ENCODE measurements at regions of chr2 and their contacts with region 1.

Region 1: GRCh38 chr2:181891966-181892798 is 652 bp downstream of the ITPRID2 start:
- DNase-seq: peak; percentile 78 to 88
- H3K4me3 ChIP-seq: peak overlapping the region; percentile 88
- H3K27ac ChIP-seq: peak overlapping the region; percentile 82
- H3K4me1 ChIP-seq: peaks cover 49% of the 10 kb centered on the region
- H3K27me3 ChIP-seq: no peaks in the 10 kb centered on the region
- CTCF ChIP-seq: peak; percentile 41; the same call in 1 of the 2 replicates

Region 2: DNA sequence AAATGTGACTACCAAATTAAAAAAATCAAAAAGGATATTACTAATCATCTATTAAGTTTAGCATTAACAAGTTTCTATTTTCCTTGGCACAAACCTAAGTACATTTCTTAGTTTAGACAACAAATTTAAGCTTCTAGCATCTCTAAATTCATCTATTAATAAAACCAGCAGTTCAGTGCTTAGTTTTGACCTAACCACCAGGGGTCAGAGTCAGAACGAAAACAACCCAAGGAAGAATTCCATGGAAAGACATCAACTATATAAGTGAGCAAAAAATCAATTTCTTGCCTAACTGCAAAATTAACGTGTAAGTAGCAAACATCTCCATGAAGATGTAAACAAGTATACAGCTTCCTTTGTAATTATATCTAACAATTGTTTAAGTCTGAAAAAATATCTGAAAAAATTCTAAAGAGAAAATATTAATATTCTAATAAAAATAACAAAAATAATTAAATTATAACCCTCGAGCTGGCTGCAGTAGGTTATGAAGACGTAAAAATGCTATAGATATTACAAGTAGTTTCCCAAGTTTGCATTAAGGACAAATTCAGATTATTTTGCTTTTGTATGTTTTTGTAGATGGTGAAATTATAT is 318.9 kb before region 1 on chr2:
- CTCF ChIA-PET with region 1: no interaction called
- POLR2A ChIA-PET with region 1: no interaction called
- intact Hi-C with region 1: loop called (anchors 10 kb)
- DNase-seq: peak; percentile 19 to 49
- H3K4me3 ChIP-seq: no peak overlapping the region
- H3K27ac ChIP-seq: no peak overlapping the region
- H3K4me1 ChIP-seq: no peaks in the 10 kb centered on the region
- H3K27me3 ChIP-seq: no peaks in the 10 kb centered on the region
- CTCF ChIP-seq: peak; percentile 86

Region 3: DNA sequence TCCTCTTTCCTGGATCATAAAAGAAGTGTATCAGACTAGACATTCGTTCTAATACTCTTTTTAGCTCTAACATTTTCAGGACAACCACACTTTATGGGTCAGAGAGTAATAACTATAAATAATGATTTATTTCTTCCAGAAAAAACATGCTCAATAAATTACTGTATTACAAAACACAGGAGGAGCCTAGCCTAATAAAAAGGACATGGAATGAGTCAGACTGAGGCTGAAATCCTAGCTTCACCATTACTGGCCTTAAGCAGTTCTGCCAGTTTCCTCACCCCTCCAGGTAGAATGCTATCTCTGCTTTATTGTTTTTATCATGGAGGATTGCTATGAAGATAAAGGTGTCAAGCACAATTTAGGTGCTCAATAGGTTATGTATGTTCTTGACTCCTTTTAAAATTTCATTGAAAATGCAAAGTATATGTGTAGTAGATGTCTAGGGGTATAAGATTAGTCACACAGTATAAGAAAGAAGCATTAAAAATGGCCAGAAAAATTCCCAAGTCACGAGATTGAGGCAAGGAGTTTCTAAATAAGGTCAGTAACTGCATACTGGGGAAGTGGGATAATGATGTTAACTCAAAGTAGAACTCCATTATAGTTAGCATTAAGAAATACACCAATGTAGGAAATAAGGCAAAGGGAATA is 106.4 kb before region 1 on chr2:
- CTCF ChIA-PET with region 1: no interaction called
- POLR2A ChIA-PET with region 1: interaction called, 3 read pairs
- intact Hi-C with region 1: loop called (anchors 1 kb)
- DNase-seq: peak; percentile 47 to 96
- H3K4me3 ChIP-seq: peak overlapping the region; percentile 14
- H3K27ac ChIP-seq: peak overlapping the region; percentile 66
- H3K4me1 ChIP-seq: peaks cover 77% of the 10 kb centered on the region
- H3K27me3 ChIP-seq: no peaks in the 10 kb centered on the region
- CTCF ChIP-seq: no peak

Region 4: GRCh38 chr2:181810823-181811695 is 81.1 kb before region 1 on chr2:
- CTCF ChIA-PET with region 1: no interaction called
- POLR2A ChIA-PET with region 1: interaction called, 8 read pairs
- intact Hi-C with region 1: loop called (anchors 1 kb)
- DNase-seq: peak; percentile 81 to 98
- H3K4me3 ChIP-seq: no peak overlapping the region
- H3K27ac ChIP-seq: peak overlapping the region; percentile 74
- H3K4me1 ChIP-seq: peaks cover 32% of the 10 kb centered on the region
- H3K27me3 ChIP-seq: no peaks in the 10 kb centered on the region
- CTCF ChIP-seq: no peak

Region 5: GRCh38 chr2:181953881-181954537 is 61.8 kb after region 1 on chr2:
- CTCF ChIA-PET with region 1: interaction called, 4 read pairs
- POLR2A ChIA-PET with region 1: no interaction called
- intact Hi-C with region 1: loop called (anchors 1 kb)
- DNase-seq: peak in 1 of 2 experiments; percentile 80
- H3K4me3 ChIP-seq: no peak overlapping the region
- H3K27ac ChIP-seq: no peak overlapping the region
- H3K4me1 ChIP-seq: peaks cover 18% of the 10 kb centered on the region
- H3K27me3 ChIP-seq: no peaks in the 10 kb centered on the region
- CTCF ChIP-seq: peak; percentile 69

Region 6: GRCh38 chr2:181977661-181978350 is 85.6 kb after region 1 on chr2:
- CTCF ChIA-PET with region 1: no interaction called
- POLR2A ChIA-PET with region 1: no interaction called
- intact Hi-C with region 1: no loop called
- DNase-seq: peak in 1 of 2 experiments; percentile 15
- H3K4me3 ChIP-seq: no peak overlapping the region
- H3K27ac ChIP-seq: no peak overlapping the region
- H3K4me1 ChIP-seq: no peaks in the 10 kb centered on the region
- H3K27me3 ChIP-seq: no peaks in the 10 kb centered on the region
- CTCF ChIP-seq: no peak